ENCODE measurements at regions of chr13 and their contacts with region 1.

Region 1: GRCh38 chr13:33228648-33229445 is 56.7 kb downstream of the STARD13 start:
- DNase-seq: peak; percentile 27 to 28
- ATAC-seq: peak in 1 of 2 experiments; percentile 65; a peak in 2 of 6 replicates
- H3K4me3 ChIP-seq: no peak overlapping the region
- H3K27ac ChIP-seq: peak overlapping the region; percentile 42 to 64; a peak in 4 of 6 replicates
- H3K4me1 ChIP-seq: peaks cover 22% of the 10 kb centered on the region
- CTCF ChIP-seq: peak; percentile 80
- EP300 ChIP-seq: no peak
- POLR2A ChIP-seq: no peak
- RAD21 ChIP-seq: peak; percentile 84 to 85

Region 2: DNA sequence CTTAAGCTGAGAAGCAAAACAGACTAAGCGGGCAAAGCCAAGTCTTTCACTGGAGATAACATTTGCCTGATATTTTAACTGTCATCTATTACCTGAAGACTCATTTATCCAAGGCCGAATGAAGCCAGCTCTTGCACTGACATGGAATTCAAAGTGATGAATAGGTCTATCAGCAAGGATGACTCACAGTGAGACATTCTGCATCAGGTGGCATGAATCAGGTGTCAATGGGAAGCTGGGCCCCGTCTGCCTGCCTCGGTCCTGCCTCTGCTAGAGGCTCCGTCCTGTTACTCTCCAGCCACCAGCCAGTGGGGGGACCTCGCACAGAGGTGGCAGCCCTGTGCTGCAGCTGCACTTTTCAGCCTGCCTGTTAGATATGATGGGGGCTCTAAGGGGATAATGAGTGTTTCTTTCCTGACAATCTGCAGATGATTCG is 33.2 kb after region 1 on chr13:
- CTCF ChIA-PET with region 1: interaction called, 12 read pairs
- POLR2A ChIA-PET with region 1: no interaction called
- DNase-seq: peak in 1 of 2 experiments; percentile 21
- ATAC-seq: peak; percentile 81 to 83; a peak in 5 of 6 replicates
- H3K4me3 ChIP-seq: no peak overlapping the region
- H3K27ac ChIP-seq: peak overlapping the region; percentile 50 to 75; a peak in 4 of 6 replicates
- H3K4me1 ChIP-seq: peaks cover 55% of the 10 kb centered on the region
- CTCF ChIP-seq: no peak
- EP300 ChIP-seq: no peak
- POLR2A ChIP-seq: no peak
- RAD21 ChIP-seq: no peak

Region 3: GRCh38 chr13:33542283-33543088 is 313.6 kb after region 1 on chr13:
- CTCF ChIA-PET with region 1: interaction called, 10 read pairs
- POLR2A ChIA-PET with region 1: interaction called, 3 read pairs
- DNase-seq: peak; percentile 73 to 97
- ATAC-seq: peak; percentile 99 to 100
- H3K4me3 ChIP-seq: peak overlapping the region; percentile 52
- H3K27ac ChIP-seq: peak overlapping the region; percentile 93
- H3K4me1 ChIP-seq: peaks cover 12% of the 10 kb centered on the region; the same call in 2 of the 3 replicates
- CTCF ChIP-seq: peak; percentile 71
- EP300 ChIP-seq: no peak
- POLR2A ChIP-seq: peak; percentile 30
- RAD21 ChIP-seq: peak; percentile 80 to 95

Measured in A549 (cell line).